Activated naive CD4-positive, alpha-beta T cell treated with anti-CD3 and anti-CD28 coated beads for 36 hours (primary cell): ENCODE measurements at regions of chr15 and their contacts with region 1.

Region 1: DNA sequence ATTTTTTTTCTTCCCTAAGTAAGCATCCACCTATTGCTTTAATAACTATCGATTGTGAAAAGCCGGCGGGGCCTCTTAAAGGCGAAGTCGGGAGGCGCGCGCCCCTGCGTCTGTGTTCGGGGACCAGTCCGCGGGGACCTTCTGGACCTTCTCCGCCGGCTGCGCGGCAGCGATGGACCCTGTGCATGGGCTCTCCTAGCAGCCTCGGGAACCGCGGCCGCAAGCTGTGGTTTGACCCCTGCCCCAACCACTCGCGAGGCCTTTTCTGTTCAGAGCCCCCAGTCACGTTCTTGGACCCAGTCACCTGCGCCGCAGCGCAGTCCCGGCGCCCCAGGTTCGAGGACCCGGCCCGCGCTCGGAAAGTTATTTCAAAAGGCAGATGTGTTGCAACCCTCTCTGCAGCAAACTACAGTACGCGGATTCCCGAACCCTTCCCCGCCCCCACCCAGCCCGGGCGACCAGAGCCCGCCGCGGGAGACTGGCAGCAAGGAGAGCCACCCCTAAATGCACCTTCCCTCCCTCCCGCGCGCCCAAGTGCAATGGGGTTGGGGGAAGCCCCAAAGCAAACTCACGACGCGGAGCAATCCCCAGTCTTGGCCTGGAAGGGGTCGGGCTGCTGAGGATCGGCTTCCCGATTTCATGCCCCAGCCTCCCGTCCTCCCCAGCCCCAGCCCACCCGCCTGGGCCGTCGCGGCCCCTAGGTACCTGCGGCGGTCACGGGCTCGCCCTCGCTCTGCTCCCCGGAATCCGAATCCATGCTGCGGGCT is 684 bp downstream of the TNFAIP8L3 start:
- DNase-seq: peak; percentile 35
- H3K4me3 Mint-ChIP-seq: peak overlapping the region; percentile 61
- H3K27ac Mint-ChIP-seq: no peak overlapping the region
- H3K4me1 Mint-ChIP-seq: peaks cover 4% of the 10 kb centered on the region
- H3K27me3 Mint-ChIP-seq: peaks cover 74% of the 10 kb centered on the region

Region 2: DNA sequence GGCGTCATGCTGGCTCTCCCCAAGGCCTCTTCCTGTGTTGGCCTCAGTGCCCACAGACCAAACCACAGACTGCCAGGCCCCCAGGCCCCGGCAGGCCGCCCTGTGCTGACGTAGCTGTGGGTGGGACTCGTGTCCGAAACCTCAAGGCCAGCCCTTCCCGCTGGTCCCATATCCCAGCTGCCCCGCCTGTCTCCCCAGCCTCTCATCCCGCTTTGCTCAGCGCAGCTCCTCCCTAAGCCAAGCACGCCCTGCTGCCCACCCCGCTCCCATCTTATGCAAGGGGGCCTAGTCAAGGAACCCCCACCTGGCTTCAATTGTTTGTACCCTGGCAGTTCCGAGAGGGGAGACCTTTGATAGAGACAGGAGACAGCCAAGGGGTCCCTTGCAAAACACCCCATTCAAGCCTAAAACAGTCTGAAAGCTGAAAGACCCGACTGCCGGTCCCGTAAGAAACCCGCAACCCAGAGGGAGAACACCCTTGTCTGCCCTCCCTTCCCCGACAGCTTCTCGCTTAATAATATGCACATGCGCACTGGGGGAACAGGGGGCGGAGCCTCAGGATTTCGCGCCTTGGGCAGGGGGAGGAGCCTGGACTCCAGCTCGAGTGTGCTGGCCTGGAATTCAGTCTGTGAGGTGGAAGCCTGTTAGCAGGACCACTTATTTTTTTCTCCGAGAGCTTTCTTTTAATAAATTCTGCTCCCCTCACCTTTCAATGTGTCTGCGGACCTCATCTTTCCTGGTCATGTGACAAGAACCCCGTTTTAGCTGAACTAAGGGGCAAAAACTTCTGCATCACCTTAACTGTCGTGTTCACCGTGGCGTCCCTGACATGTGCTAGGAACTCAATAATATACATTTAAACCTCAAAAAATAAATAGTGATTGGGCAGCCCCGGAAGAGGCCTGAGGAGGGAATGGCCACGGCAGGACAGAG is 16.5 kb before region 1 on chr15:
- CTCF ChIA-PET with region 1: no interaction called
- intact Hi-C with region 1: loop called (anchors 2 kb)
- DNase-seq: peak; percentile 91
- H3K4me3 Mint-ChIP-seq: peak overlapping the region; percentile 68
- H3K27ac Mint-ChIP-seq: peak overlapping the region; percentile 85
- H3K4me1 Mint-ChIP-seq: peaks cover 24% of the 10 kb centered on the region
- H3K27me3 Mint-ChIP-seq: peaks cover 8% of the 10 kb centered on the region